Testis (tissue), 5 donors: ENCODE measurements at regions of chr7 and their contacts with region 1.

Region 1: DNA sequence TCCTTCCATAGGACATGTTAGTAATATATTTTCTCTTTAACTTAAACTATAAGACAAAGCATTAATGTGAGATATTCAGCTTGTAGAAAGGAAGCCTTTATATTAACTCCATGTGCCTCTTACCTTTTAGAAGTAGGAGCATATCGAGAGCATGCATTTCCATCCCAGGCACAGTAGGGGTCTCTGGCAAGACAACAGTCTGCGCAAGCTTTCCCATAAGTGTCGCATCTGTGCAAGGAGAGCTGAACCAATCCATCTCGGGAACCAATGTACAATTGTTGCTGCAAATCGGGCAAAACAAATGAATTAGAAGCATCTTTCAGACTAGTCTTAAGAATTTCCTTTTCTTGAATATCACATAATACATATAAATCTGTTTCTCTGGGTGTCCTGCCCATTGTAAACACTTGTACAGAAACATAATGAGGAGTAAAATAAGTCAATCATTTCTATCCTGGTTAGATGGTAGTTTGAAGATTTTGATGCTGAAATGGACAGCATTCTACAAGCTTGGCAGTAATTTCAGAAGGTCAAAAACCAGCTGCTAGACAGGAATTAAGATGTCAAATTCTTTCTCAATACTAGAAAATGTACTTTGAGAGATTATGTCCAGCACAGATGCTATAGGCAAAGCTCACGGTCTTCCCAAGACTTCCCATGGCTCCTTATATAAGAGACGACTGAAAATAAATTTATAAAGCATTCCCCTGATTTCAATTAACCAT is 171.8 kb downstream of the SEMA3D start:
- DNase-seq: no peak
- H3K4me3 ChIP-seq: no peak overlapping the region
- H3K27ac ChIP-seq: no peak overlapping the region
- H3K4me1 ChIP-seq: no peaks in the 10 kb centered on the region
- H3K27me3 ChIP-seq: no peaks in the 10 kb centered on the region
- CTCF ChIP-seq: no peak
- POLR2A ChIP-seq: no peak

Region 2: GRCh38 chr7:83964318-83964717 is 1050.8 kb before region 1 on chr7:
- intact Hi-C with region 1: loop called (anchors 10 kb)
- DNase-seq: no peak
- H3K4me3 ChIP-seq: no peak overlapping the region
- H3K27ac ChIP-seq: no peak overlapping the region
- H3K4me1 ChIP-seq: no peaks in the 10 kb centered on the region
- H3K27me3 ChIP-seq: no peaks in the 10 kb centered on the region
- CTCF ChIP-seq: no peak
- POLR2A ChIP-seq: no peak

Region 3: DNA sequence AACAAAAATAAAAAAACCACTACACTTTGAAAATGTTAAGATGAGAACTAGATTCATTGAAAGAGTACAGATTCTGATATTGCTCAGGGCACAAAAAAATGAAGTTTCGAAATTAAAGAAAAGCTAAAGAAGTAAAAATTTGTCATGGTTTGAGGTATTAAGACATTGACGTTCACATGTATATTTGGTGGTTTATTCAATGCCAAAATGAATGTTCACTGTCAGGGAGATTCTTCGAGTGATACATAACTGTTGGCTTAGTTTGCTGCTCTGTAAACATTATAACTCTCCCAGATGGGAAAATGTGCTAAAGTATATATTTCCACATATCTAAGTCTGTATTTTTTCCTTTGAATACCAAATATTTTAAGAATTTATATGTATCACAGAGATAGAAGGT is 173.3 kb before region 1 on chr7:
- intact Hi-C with region 1: no loop called
- DNase-seq: no peak
- H3K4me3 ChIP-seq: no peak overlapping the region
- H3K27ac ChIP-seq: no peak overlapping the region
- H3K4me1 ChIP-seq: no peaks in the 10 kb centered on the region
- H3K27me3 ChIP-seq: no peaks in the 10 kb centered on the region
- CTCF ChIP-seq: no peak
- POLR2A ChIP-seq: no peak